Naive thymus-derived CD4-positive, alpha-beta T cell (primary cell): ENCODE measurements at regions of chr7 and their contacts with region 1.

Region 1: DNA sequence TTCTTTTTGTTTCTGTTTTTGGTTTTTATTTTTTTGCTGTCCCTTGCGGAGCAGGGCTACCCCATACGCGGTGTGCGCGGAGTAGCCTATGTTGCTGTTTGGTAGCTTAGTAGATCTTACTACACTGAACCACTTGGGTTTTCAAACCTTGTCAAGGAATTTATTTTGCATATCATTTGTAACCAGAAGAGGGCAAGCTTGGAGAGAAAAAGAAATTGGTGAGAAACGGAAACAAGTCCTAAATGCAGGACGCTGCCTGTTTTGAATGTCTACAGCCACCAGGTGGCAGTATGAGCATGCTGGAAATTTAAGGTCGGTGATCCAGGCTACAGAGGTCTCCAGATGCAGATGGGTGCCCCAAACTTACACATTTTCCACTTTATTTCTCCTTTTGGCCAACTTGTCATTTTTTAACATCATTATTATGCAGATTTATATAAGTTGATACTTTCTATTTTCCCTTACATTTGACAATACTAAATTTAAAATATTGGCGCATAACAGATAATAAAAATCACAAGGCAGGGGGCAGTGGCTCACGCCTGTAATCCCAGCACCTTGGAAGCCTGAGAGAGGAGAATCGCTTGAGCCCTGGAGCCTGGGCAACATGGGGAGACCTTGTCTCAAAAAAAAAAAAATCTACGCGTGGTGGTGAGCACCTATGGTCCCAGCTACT is 15.3 kb upstream of the TRA2A start:
- DNase-seq: peak; percentile 37 to 89 (median 82)
- ATAC-seq: peak; percentile 98
- H3K4me3 ChIP-seq: no peak overlapping the region
- H3K4me3 Mint-ChIP-seq: no peak overlapping the region
- H3K27ac ChIP-seq: no peak overlapping the region
- H3K27ac Mint-ChIP-seq: peak overlapping the region in 6 of 9 donors; percentile 22 to 90 (median 40)
- H3K4me1 ChIP-seq: no peaks in the 10 kb centered on the region
- H3K4me1 Mint-ChIP-seq: peaks cover 0 to 14% (median 5%) of the 10 kb centered on the region in 7 donors
- H3K27me3 ChIP-seq: no peaks in the 10 kb centered on the region
- H3K27me3 Mint-ChIP-seq: peaks cover 0 to 5% (median 0%) of the 10 kb centered on the region in 5 donors

Region 2: DNA sequence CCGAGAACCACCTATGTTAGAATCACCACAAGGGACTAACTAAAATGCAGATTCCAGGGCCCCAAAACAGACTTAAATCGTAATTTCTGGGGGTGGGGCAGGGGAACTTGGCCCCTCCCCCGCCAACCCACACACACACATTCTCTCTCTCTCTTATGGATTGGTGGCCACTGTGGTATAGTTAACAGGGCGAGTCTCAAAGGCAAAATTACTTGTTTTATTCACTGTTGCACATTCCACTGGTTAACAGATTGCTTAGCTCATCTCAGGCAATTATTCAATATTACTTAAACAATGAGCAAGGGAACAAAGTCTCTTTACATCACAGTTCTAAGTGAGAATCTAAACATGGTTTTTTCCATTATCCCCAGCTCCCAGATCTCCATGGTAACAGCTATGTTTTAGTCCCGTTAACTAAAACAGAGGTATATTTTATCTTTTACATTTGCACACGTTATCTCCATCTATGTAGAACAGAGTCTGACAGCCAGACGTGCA is 115.3 kb before region 1 on chr7:
- CTCF ChIA-PET with region 1: no interaction called
- POLR2A ChIA-PET with region 1: interaction called, 3 read pairs
- intact Hi-C with region 1: loop called in 1 of 2 experiments (anchors 1 kb)
- DNase-seq: no peak
- ATAC-seq: no peak
- H3K4me3 ChIP-seq: no peak overlapping the region
- H3K4me3 Mint-ChIP-seq: no peak overlapping the region
- H3K27ac ChIP-seq: no peak overlapping the region
- H3K27ac Mint-ChIP-seq: no peak overlapping the region
- H3K4me1 ChIP-seq: no peaks in the 10 kb centered on the region
- H3K4me1 Mint-ChIP-seq: no peaks in the 10 kb centered on the region
- H3K27me3 ChIP-seq: no peaks in the 10 kb centered on the region
- H3K27me3 Mint-ChIP-seq: peaks cover 20 to 33% (median 26%) of the 10 kb centered on the region in 5 donors

Region 3: GRCh38 chr7:23696916-23697441 is 149.9 kb after region 1 on chr7:
- CTCF ChIA-PET with region 1: interaction called, 11 read pairs
- POLR2A ChIA-PET with region 1: no interaction called
- intact Hi-C with region 1: loop called in 1 of 2 experiments (anchors 1 kb)
- DNase-seq: peak; percentile 4 to 49 (median 37)
- ATAC-seq: peak; percentile 82
- H3K4me3 ChIP-seq: no peak overlapping the region
- H3K4me3 Mint-ChIP-seq: no peak overlapping the region
- H3K27ac ChIP-seq: no peak overlapping the region
- H3K27ac Mint-ChIP-seq: no peak overlapping the region
- H3K4me1 ChIP-seq: no peaks in the 10 kb centered on the region
- H3K4me1 Mint-ChIP-seq: peaks cover 0 to 1% (median 0%) of the 10 kb centered on the region in 7 donors
- H3K27me3 ChIP-seq: no peaks in the 10 kb centered on the region
- H3K27me3 Mint-ChIP-seq: no peaks in the 10 kb centered on the region